ENCODE measurements at regions of chr7 and their contacts with region 1.

Region 1: DNA sequence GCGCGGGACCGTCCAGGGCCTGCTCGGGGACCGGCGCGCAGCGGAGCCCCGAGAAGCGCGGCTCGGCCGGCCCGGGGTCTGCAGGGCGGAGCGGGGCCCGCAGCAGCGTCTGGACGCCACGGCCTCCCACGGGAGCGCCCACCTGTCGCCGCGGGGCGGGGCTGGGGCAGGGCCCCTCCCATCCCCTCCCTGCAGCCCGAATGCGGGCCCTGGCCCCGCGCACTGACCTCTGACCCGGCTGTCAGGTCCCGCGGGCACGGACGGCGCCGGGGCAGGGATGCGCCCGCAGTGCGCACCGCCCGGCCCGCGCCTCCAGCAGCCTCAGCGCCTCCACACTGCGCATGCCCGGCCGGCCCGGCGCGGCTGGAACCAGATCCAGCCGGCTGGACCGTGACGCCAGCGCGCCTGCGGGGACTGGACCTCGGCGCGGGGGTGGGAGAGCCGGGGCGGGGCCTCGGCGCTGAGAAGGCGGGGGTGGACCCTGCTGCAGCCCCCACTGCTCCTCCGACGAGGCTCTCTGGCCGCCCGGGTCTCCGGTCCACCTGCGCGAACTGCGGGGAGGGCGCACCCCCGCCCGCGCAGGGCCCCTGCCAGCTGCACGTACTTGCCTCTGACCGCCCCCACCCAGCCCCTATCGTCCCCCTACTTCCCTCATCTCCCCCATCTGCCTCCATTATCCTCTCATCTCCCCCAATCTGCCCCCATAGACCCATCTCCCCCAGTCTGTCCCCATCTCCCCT is 16.1 kb upstream of the GPR146 start:
- DNase-seq: peak; percentile 56 to 94
- H3K4me3 ChIP-seq: peak overlapping the region; percentile 83 to 86
- H3K27ac ChIP-seq: peak overlapping the region; percentile 78 to 91
- H3K4me1 ChIP-seq: peaks cover 0 to 20% of the 10 kb centered on the region in 2 donors
- H3K27me3 ChIP-seq: no peaks in the 10 kb centered on the region
- CTCF ChIP-seq: no peak

Region 2: GRCh38 chr7:379456-380138 is 648.6 kb before region 1 on chr7:
- intact Hi-C with region 1: no loop called
- DNase-seq: peak in 1 of 2 donors; percentile 63
- H3K4me3 ChIP-seq: peak overlapping the region; percentile 48 to 63
- H3K27ac ChIP-seq: no peak overlapping the region
- H3K4me1 ChIP-seq: peaks cover 3% of the 10 kb centered on the region in 2 donors
- H3K27me3 ChIP-seq: no peaks in the 10 kb centered on the region
- CTCF ChIP-seq: no peak

Region 3: GRCh38 chr7:992709-993607 is 35.2 kb before region 1 on chr7:
- intact Hi-C with region 1: loop called (anchors 2 kb)
- DNase-seq: peak; percentile 81 to 97
- H3K4me3 ChIP-seq: no peak overlapping the region
- H3K27ac ChIP-seq: no peak overlapping the region
- H3K4me1 ChIP-seq: peaks cover 0 to 3% of the 10 kb centered on the region in 2 donors
- H3K27me3 ChIP-seq: peaks cover 16% of the 10 kb centered on the region
- CTCF ChIP-seq: peak; percentile 100

Region 4: GRCh38 chr7:1044191-1045068 is 16.2 kb after region 1 on chr7 and contains the start of gene GPR146:
- intact Hi-C with region 1: loop called (anchors 1 kb)
- DNase-seq: peak; percentile 92 to 99
- H3K4me3 ChIP-seq: peak within 1 kb of the TSS; percentile 74 to 77
- H3K27ac ChIP-seq: peak within 1 kb of the TSS; percentile 80 to 94
- H3K4me1 ChIP-seq: peaks cover 3 to 22% of the 10 kb centered on the region in 2 donors
- H3K27me3 ChIP-seq: no peaks in the 10 kb centered on the region
- CTCF ChIP-seq: peak; percentile 61 to 78 (median 72)
- total RNA-seq, gene GPR146: 224 TPM

Region 5: GRCh38 chr7:1059200-1060091 is 31.2 kb after region 1 on chr7:
- intact Hi-C with region 1: loop called (anchors 1 kb)
- DNase-seq: no peak
- H3K4me3 ChIP-seq: peak overlapping the region in 1 of 2 donors; percentile 26
- H3K27ac ChIP-seq: peak overlapping the region in 1 of 2 donors; percentile 13
- H3K4me1 ChIP-seq: peaks cover 0 to 6% of the 10 kb centered on the region in 2 donors
- H3K27me3 ChIP-seq: no peaks in the 10 kb centered on the region
- CTCF ChIP-seq: no peak

Region 6: DNA sequence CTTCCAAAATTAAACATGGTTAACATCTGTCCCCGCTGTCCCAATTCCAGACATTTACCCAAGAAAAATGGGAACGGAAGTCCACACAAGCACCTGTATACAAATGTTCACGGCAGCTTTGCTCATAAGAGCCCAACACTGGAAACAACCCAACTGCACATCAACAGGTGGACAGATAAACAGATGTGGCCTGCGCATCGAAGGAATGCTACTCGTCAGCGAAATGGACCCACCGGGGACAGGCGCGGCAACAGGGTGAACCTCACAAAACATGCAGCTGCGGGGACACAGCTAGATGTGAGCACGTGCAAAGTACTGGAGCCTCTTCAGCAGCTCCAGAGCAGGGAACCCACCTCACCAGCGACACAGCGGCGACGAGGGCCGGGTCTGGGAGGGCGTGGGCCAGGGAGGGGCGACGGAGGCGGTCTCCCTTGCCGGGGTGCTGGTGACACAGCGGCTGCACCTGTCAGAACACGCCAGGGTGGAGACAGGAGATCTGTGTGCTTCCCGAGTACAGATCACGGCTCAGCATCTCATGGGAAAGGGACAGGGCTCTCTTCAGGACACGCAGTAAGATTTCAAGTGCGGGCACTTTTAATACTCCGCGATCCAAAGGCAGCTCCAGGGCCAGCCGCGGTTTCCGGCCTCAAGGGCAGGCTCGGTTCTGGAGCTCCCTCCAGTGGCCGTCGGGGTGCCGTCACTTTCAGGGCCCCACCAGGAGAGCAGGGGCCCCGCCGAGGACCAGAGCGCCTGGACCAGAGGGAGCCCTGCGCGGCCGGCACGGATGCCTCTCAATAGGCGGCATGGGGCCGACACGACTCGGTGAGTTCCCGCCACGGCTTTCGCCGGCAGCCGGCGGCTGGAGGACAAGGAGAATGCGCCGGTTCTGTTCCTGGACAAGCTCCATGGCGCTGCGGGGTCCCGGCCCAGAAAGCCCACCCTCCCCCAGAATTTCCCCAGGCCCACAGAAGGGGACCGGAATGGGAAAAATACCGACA is 37.4 kb after region 1 on chr7:
- intact Hi-C with region 1: loop called (anchors 1 kb)
- DNase-seq: peak; percentile 49 to 89
- H3K4me3 ChIP-seq: peak overlapping the region; percentile 30 to 37
- H3K27ac ChIP-seq: no peak overlapping the region
- H3K4me1 ChIP-seq: peaks cover 0 to 7% of the 10 kb centered on the region in 2 donors
- H3K27me3 ChIP-seq: no peaks in the 10 kb centered on the region
- CTCF ChIP-seq: peak; percentile 90 to 97 (median 97)

Region 7: DNA sequence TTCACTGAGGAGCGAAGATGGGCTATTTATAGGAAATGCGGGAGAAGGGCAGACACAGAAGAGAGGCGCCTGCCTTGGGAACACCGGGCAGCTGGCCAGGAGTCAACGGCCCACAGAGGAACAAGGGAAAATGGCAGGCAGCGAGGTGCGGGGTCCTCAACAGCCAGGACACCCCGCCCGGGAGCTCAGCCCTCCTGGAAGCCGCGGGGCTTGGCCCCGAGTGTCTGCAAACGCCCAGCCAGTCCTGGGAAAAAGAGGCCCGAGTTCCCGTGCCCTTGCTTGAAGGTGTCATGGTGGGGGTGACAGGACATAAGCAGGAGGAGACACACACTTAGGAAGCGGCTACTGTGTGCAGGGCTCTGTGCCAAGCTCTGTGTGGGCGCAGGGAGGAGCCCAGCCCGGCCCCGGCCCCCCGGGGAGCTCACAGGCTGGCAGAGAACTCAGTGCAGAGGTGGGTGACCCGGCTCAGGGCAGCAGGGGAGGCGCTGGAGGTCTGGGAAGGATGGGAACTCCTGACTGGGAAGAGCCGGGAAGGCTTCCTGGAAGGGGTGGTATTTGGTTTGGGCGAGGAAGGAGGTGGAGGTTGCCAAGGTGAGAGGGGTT is 721.8 kb after region 1 on chr7:
- intact Hi-C with region 1: no loop called
- DNase-seq: no peak
- H3K4me3 ChIP-seq: no peak overlapping the region
- H3K27ac ChIP-seq: no peak overlapping the region
- H3K4me1 ChIP-seq: no peaks in the 10 kb centered on the region
- H3K27me3 ChIP-seq: no peaks in the 10 kb centered on the region
- CTCF ChIP-seq: no peak

Measured in ascending aorta (tissue), 2 donors.